ENCODE measurements at regions of chr20 and their contacts with region 1.

Region 1: GRCh38 chr20:63707549-63708300 is at the starts of genes ARFRP1 and ZGPAT:
- DNase-seq: peak; percentile 93 to 95
- ATAC-seq: peak; percentile 96 to 98 (median 96)
- H3K4me3 ChIP-seq: peak within 1 kb of the TSS; percentile 97
- H3K27ac ChIP-seq: peak within 1 kb of the TSS; percentile 92
- H3K4me1 ChIP-seq: peaks cover 16% of the 10 kb centered on the region
- H3K27me3 ChIP-seq: no peaks in the 10 kb centered on the region
- CTCF ChIP-seq: no peak
- total RNA-seq, gene ARFRP1: 22.9 to 38.9 (median 32.6) TPM
- total RNA-seq, gene ZGPAT: 10.7 to 18.2 (median 14.9) TPM

Region 2: DNA sequence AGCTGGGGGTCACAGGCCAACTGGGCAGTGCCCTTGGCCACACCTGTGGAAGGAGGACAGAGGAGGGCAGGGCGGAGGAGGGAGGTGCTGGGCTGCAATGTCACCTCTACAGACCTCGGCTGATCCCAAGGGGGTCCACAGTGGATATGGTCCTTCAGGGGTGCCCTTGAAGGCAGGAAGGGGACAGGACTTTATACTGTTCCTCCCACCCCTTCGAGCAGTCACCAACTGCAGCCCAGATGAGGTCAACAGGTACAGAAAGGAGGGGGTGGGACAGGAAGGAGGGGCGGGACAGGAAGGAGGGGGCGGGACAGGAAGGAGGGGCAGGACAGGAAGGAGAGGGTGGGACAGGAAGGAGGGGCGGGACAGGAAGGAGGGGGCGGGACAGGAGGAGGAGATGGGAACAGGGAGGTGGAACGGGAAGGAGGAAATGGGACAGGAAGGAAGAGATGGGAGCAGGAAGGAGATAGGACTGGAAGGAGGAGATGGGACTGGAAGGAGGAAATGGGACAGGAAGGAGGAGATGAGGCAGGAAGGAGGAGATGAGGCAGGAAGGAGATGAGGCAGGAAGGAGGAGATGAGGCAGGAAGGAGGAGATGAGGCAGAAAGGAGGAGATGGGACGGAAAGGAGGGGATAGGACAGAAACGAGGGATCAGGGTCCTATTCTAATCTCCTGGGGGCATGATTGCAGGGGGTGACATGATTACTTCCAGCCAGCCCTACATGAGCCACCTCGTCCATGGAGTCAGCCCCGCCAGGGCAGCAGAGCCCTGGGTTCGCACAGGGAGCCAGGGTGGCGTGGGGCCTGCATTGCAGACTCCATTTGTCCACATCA is 930.8 kb before region 1 on chr20:
- intact Hi-C with region 1: no loop called
- DNase-seq: no peak
- ATAC-seq: peak; percentile 17 to 67 (median 50)
- H3K4me3 ChIP-seq: no peak overlapping the region
- H3K27ac ChIP-seq: no peak overlapping the region
- H3K4me1 ChIP-seq: peaks cover 5% of the 10 kb centered on the region
- H3K27me3 ChIP-seq: peaks cover 0 to 42% (median 3%) of the 10 kb centered on the region in 3 donors
- CTCF ChIP-seq: no peak

Region 3: GRCh38 chr20:63739130-63740069 is 31.7 kb after region 1 on chr20 and contains the start of gene SLC2A4RG:
- intact Hi-C with region 1: loop called (anchors 2 to 5 kb)
- DNase-seq: peak; percentile 86 to 91
- ATAC-seq: peak; percentile 68 to 77 (median 70)
- H3K4me3 ChIP-seq: peak within 1 kb of the TSS; percentile 79
- H3K27ac ChIP-seq: peak within 1 kb of the TSS; percentile 95
- H3K4me1 ChIP-seq: peaks cover 15% of the 10 kb centered on the region
- H3K27me3 ChIP-seq: no peaks in the 10 kb centered on the region
- CTCF ChIP-seq: no peak
- total RNA-seq, gene SLC2A4RG: 40.2 to 79.1 (median 54.7) TPM